Posterior cingulate gyrus (tissue), 11 donors: ENCODE measurements at regions of chr6 and their contacts with region 1.

Region 1: GRCh38 chr6:73610444-73611275 is 43.1 kb downstream of the SLC17A5 start:
- DNase-seq: no peak

Region 2: GRCh38 chr6:73515204-73515655 is 95.4 kb before region 1 on chr6:
- intact Hi-C with region 1: loop called (anchors 1 kb)
- DNase-seq: no peak